Naive thymus-derived CD8-positive, alpha-beta T cell (primary cell): ENCODE measurements at regions of chr15 and their contacts with region 1.

Region 1: GRCh38 chr15:43510200-43511011 is 7.0 kb upstream of the MAP1A start:
- DNase-seq: peak; percentile 91 to 98 (median 94)
- ATAC-seq: peak; percentile 88 to 90
- H3K4me3 Mint-ChIP-seq: peak overlapping the region; percentile 88 to 100 (median 94)
- H3K27ac Mint-ChIP-seq: peak overlapping the region; percentile 94 to 100 (median 98)
- H3K4me1 Mint-ChIP-seq: peaks cover 16 to 36% (median 24%) of the 10 kb centered on the region in 4 donors
- H3K27me3 Mint-ChIP-seq: peaks cover 0 to 4% (median 2%) of the 10 kb centered on the region in 5 donors

Region 2: DNA sequence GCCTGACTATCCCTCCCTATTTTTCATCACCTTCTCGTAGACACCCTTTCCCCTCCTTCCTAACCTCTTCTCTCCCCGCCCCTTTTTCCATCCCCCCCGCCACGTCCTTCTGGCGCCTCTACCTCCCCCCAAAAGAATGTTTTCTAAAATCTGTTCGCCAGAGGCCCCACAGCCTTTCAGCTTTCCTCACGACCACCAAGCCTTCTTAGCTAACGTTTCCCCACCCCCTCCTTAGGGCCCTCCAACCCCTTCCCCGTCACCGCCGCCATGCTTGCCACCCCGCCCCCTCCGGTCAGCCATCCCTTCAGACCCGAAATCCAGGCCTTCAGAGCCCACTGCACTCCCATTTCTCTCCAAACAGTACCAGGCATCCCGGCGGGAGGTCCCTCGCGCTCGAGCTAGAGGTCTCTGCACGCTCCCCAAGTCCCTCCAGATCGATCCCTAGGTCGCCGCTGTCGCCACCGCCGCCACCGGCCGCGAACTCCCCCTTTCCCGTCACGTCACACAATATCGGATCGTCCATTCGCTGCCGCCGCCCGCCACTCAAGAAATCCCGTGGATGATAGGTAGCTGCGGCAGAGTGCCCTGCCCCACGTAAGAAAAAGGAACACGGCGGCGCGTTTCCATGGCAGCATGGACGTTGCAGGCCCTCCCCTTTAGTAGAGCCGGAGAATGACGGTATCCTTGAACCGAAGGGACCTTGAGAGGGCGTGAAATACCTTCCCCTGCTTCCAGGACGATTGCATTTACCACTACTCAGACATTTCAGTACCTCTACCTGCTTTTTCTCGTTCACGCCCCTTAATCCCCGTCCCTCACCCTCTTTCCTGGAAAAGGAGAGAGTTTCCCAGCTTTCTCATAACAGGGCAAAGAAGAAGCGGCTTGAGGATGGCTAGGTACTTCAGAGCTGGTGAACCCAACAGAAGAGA is 17.5 kb before region 1 on chr15 and contains the start of gene TP53BP1:
- POLR2A ChIA-PET with region 1: interaction called, 56 read pairs
- DNase-seq: peak; percentile 85 to 98 (median 94)
- ATAC-seq: peak; percentile 97 to 98
- H3K4me3 Mint-ChIP-seq: peak within 1 kb of the TSS; percentile 88 to 100 (median 98)
- H3K27ac Mint-ChIP-seq: peak within 1 kb of the TSS; percentile 92 to 100 (median 98)
- H3K4me1 Mint-ChIP-seq: peaks cover 20 to 42% (median 34%) of the 10 kb centered on the region in 4 donors
- H3K27me3 Mint-ChIP-seq: no peaks in the 10 kb centered on the region
- polyA plus RNA-seq, gene TP53BP1: 6.5 to 8.5 (median 7.8) TPM